Activated naive CD4-positive, alpha-beta T cell treated with anti-CD3 and anti-CD28 coated beads, Interleukin-2, amount 10 ng/mL, durations not matched to agents 7 days and 5 days (primary cell): ENCODE measurements at regions of chr10 and their contacts with region 1.

Region 1: GRCh38 chr10:27655296-27655695 is 90.3 kb downstream of the MKX start:
- DNase-seq: no peak
- H3K4me3 Mint-ChIP-seq: no peak overlapping the region
- H3K27ac Mint-ChIP-seq: no peak overlapping the region
- H3K4me1 Mint-ChIP-seq: no peaks in the 10 kb centered on the region
- H3K27me3 Mint-ChIP-seq: peaks cover 10% of the 10 kb centered on the region

Region 2: GRCh38 chr10:27446091-27446918 is 209.0 kb before region 1 on chr10:
- CTCF ChIA-PET with region 1: interaction called, 12 read pairs
- DNase-seq: no peak
- H3K4me3 Mint-ChIP-seq: no peak overlapping the region
- H3K27ac Mint-ChIP-seq: no peak overlapping the region
- H3K4me1 Mint-ChIP-seq: peaks cover 11% of the 10 kb centered on the region
- H3K27me3 Mint-ChIP-seq: peaks cover 22% of the 10 kb centered on the region

Region 3: DNA sequence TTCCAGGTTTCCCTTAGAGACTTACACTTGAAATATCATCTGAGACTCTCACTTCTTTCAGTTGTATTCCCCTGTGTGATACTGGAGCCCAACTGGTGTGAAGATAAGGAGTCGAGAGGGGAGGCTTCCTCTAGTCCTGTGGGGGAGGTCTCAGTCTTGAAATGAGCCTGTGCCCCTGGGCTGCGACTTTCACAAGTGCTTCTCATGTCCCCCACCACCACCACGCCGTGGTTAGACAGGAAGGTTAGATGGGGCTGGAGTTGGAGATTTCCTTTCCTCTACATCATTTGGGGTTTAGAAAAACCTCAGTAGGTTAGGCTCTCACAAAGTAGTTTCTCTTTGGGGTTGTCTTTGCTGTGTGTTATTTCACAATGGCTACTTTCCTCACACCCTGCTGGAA is 115.9 kb after region 1 on chr10:
- CTCF ChIA-PET with region 1: no interaction called
- DNase-seq: peak; percentile 27
- H3K4me3 Mint-ChIP-seq: no peak overlapping the region
- H3K27ac Mint-ChIP-seq: no peak overlapping the region
- H3K4me1 Mint-ChIP-seq: peaks cover 9% of the 10 kb centered on the region
- H3K27me3 Mint-ChIP-seq: peaks cover 43% of the 10 kb centered on the region